Activated CD4-positive, alpha-beta T cell treated with anti-CD3 and anti-CD28 coated beads for 36 hours (primary cell): ENCODE measurements at regions of chr19 and their contacts with region 1.

Region 1: DNA sequence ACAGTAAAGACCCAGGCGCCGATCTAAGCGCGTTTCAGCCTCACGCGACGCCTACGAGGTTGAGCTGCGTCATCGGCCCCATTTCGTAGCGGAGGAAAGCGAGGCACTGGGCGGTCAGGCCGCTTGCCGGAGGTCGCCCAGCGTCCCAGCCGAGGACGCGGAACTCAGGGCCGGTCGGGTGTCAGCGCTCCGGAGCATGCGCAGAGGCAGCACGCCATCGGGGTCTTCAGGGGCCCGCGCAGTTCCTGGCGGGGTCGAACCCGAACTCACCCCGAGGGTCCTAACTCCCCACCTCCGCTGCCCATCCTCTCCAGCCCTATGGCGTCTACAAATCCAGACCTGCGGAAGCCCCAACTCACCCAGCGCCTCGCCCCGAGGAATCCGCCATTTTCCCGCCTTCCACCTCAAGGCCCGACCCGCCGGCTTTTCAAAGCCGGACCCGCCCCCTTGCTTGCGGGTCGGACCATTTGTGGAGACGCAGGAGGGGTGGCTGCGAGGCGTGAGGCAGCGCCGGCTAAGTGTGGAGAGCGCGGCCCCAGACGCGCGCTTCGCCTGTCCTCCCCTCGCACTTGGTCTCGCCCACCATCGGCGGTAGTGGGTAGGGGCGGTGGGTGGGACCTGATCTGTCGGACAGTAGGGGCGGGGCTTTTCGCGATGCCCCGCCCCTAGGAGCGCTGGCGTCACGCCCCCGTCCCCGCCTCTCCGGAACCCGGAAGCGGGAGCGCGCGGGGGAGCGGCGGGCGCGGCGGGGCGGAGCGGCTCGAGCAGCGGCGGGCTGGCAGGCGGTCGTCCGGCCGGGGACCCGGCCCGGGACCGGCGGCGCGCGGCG is at the starts of genes HAUS8 and MYO9B:
- DNase-seq: peak; percentile 100
- ATAC-seq: peak; percentile 82
- H3K4me3 Mint-ChIP-seq: peak within 1 kb of the TSS; percentile 99
- H3K27ac Mint-ChIP-seq: peak within 1 kb of the TSS; percentile 98
- H3K4me1 Mint-ChIP-seq: peaks cover 56% of the 10 kb centered on the region
- H3K27me3 Mint-ChIP-seq: no peaks in the 10 kb centered on the region
- total RNA-seq, gene HAUS8: 32.6 to 41.7 TPM
- total RNA-seq, gene MYO9B: 90.3 to 98.5 TPM

Region 2: GRCh38 chr19:16111160-16111908 is 963.9 kb before region 1 on chr19 and contains the start of gene RAB8A:
- CTCF ChIA-PET with region 1: no interaction called
- POLR2A ChIA-PET with region 1: no interaction called
- intact Hi-C with region 1: loop called in 1 of 2 experiments (anchors 1 kb)
- DNase-seq: peak; percentile 99
- ATAC-seq: peak; percentile 96
- H3K4me3 Mint-ChIP-seq: peak within 1 kb of the TSS; percentile 96
- H3K27ac Mint-ChIP-seq: peak within 1 kb of the TSS; percentile 97
- H3K4me1 Mint-ChIP-seq: peaks cover 39% of the 10 kb centered on the region
- H3K27me3 Mint-ChIP-seq: no peaks in the 10 kb centered on the region
- total RNA-seq, gene RAB8A: 165 to 218 TPM

Region 3: DNA sequence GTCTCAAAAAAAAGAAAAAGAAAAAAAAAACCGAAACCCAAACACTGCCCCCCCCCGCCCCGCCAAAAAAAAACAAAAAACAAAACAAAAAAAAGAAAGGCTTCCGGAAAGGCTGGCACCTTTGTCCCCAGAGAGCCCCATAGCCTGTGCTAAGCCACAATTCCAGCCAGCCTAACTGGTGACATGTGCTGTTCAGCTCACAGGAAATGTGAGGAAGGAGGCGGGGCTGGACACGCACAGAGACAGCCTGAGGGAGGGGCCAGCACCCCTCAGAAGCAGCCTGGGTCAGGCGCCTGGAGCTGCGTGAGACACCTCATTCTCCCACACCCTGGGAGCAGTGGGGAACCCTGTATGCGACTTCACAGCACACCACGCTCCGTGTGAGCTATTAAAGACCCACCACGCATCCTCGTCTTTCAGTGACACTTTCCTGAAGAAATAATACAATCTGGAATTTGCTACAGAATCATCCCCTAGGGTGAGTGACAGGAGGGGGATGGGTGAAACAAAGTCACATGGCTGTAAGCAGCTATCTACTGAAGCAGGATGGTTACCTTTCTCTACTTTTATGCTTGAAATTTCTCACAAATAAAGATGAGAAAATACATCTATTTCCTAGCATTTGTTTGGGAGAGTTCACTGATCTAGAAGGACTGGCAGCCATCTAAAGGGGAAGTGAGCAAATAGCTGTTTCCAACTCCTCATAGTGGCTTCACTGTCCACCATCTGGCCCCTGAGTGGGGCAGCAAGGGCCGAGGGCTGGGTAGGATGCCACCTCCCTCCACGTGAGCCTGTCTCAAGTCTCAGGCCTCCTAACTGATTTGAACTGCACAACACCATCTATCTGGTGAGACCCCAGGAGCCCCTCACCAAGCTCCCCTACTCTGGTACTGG is 490.8 kb before region 1 on chr19:
- CTCF ChIA-PET with region 1: no interaction called
- POLR2A ChIA-PET with region 1: no interaction called
- intact Hi-C with region 1: loop called (anchors 5 to 10 kb)
- DNase-seq: peak; percentile 94
- ATAC-seq: peak; percentile 79
- H3K4me3 Mint-ChIP-seq: peak overlapping the region; percentile 79
- H3K27ac Mint-ChIP-seq: peak overlapping the region; percentile 95
- H3K4me1 Mint-ChIP-seq: peaks cover 76% of the 10 kb centered on the region
- H3K27me3 Mint-ChIP-seq: no peaks in the 10 kb centered on the region

Region 4: DNA sequence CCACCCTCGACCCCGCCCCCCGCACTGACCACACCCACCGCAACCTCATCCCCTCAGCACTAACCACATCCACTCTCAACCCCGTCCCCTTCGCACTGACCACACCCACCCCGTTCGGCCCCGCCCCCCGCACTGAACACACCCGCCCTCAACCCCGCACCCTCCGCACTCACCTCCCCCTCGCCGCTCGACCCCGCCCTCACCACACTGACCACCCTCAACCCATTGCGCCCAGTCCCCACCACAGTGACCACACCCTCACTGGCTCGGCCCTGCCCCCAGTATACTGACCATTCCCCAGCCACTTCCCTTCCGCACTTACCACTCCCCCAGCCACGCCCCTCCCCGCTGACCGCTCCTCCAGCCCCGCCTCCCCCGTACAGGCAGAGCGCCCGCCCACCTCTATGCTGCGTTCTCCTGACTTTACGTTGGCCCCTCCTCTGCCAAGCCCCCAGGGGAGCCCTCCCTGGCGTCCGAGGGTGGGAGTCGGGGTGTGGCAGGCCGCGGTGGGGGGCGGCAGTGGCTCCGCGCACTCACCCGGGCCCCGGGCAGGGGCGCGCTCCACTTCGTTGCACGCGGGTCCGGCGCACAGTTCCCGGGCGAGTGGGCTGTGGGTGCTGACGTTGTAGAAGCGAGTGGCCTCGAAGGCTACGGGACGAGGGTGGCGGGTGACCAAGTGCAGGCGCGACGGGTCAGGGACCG is 177.9 kb before region 1 on chr19:
- CTCF ChIA-PET with region 1: no interaction called
- POLR2A ChIA-PET with region 1: no interaction called
- intact Hi-C with region 1: loop called in 1 of 2 experiments (anchors 1 kb)
- DNase-seq: peak; percentile 75
- ATAC-seq: peak; percentile 53
- H3K4me3 Mint-ChIP-seq: no peak overlapping the region
- H3K27ac Mint-ChIP-seq: no peak overlapping the region
- H3K4me1 Mint-ChIP-seq: peaks cover 16% of the 10 kb centered on the region
- H3K27me3 Mint-ChIP-seq: peaks cover 26% of the 10 kb centered on the region

Region 5: DNA sequence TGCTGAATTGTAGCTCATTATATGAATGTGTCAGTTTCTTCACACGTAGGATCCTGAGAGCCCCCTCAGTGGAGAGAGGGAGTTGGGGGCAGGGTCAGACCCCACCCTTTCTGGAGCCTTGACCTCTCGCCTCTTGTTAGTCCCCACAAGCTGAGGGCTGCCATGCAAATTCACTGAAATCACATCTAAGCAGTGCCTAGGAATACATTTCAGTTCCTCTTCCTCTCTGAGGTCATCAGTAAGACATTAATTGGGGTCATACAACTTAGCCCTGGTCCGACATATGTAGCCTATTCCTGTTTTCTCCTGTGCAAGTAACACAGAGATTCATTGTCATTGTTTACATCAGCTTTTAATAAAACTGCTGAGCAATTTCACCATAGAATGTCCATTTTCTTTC is 30.3 kb after region 1 on chr19:
- CTCF ChIA-PET with region 1: no interaction called
- POLR2A ChIA-PET with region 1: no interaction called
- intact Hi-C with region 1: no loop called
- DNase-seq: no peak
- ATAC-seq: no peak
- H3K4me3 Mint-ChIP-seq: no peak overlapping the region
- H3K27ac Mint-ChIP-seq: no peak overlapping the region
- H3K4me1 Mint-ChIP-seq: peaks cover 23% of the 10 kb centered on the region
- H3K27me3 Mint-ChIP-seq: no peaks in the 10 kb centered on the region

Region 6: DNA sequence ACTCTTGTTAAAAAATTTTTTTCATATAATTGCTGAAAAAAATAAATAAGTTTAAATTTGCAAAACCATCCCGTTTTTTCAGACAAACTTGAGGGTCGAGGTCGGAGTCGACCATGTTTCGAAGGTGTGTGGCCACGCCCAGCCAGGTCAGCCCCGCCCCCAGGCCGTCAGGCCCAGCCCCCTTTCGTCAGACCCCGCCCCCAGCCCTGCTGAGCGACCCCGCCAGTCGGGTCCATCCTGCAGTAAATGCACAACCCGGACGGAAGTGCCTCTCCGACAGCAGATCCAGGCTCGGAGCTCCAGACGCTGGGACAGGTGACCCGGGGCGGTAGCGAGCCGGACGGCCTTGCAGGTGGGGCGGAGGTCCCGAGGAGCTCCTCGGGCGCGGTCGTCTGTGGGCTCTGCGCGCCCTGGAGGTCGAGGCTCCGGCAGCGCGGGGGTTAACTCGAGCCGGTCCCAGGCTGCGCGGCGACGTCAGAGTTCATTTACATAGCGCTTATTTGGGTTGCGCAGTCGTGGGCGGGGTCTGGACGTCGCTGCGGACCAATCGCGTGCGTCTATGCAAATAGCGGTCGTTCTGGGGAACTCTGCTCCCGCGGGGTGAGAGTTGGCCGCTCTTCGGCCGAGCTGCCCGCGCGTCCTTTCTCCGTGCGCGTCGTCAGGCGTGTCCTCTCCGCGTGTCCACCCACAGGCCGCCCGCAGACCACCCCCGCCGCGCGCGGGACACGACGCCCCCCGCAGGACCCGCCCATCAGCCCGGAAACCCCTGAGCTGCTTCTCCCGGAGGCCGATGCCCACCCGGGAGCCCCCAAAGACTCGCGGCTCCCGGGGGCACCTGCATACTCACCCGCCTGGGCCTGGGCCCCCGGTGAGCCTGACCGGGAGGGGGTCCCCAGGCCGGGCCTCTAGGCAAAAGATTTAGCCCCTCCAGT is 151.0 kb after region 1 on chr19 and contains the start of gene OCEL1:
- CTCF ChIA-PET with region 1: no interaction called
- POLR2A ChIA-PET with region 1: interaction called, 5 read pairs
- intact Hi-C with region 1: loop called in 1 of 2 experiments (anchors 1 kb)
- DNase-seq: peak; percentile 99
- ATAC-seq: peak; percentile 92
- H3K4me3 Mint-ChIP-seq: peak within 1 kb of the TSS; percentile 80
- H3K27ac Mint-ChIP-seq: peak within 1 kb of the TSS; percentile 93
- H3K4me1 Mint-ChIP-seq: peaks cover 7% of the 10 kb centered on the region
- H3K27me3 Mint-ChIP-seq: no peaks in the 10 kb centered on the region
- total RNA-seq, gene OCEL1: 10.9 to 11.7 TPM

Region 7: GRCh38 chr19:17305517-17306284 is 230.5 kb after region 1 on chr19 and contains the start of gene MRPL34:
- CTCF ChIA-PET with region 1: no interaction called
- POLR2A ChIA-PET with region 1: no interaction called
- intact Hi-C with region 1: loop called in 1 of 2 experiments (anchors 1 kb)
- DNase-seq: peak; percentile 97
- ATAC-seq: peak; percentile 70
- H3K4me3 Mint-ChIP-seq: peak within 1 kb of the TSS; percentile 86
- H3K27ac Mint-ChIP-seq: peak within 1 kb of the TSS; percentile 92
- H3K4me1 Mint-ChIP-seq: peaks cover 46% of the 10 kb centered on the region
- H3K27me3 Mint-ChIP-seq: no peaks in the 10 kb centered on the region
- total RNA-seq, gene MRPL34: 72.0 to 88.6 TPM

Region 8: DNA sequence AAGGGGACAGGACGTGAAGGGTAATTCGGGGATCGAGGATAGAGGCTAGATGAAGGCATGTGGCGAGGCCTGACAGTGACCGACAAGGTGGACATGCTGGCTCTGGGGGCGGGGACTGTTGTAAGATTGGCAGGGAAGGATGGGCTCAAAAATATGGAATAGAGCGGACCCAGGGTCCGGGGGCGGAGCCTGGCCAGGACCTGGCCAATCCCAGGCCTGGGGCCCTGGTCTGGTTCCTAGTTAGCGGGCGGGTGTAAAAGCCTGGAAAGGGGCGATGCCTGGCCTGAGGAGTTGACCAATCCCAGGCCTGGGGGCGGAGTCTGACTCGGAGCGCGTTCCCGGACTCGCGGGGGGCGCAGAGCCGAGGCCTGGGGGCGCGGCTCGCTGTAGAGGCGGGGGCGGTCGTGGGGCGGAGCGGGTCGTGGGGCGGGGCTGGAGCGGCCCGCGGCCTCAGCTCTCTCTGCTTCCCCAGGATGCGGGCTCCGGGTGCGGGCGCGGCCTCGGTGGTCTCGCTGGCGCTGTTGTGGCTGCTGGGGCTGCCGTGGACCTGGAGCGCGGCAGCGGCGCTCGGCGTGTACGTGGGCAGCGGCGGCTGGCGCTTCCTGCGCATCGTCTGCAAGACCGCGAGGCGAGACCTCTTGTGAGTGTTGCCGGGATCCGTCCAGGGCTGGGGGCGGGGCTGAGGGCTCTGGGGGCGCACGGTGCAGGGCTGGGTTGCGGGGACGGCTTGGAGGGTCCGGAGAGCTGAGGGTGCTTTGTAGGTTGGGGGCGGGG is 395.0 kb after region 1 on chr19 and contains the start of gene SLC27A1:
- CTCF ChIA-PET with region 1: no interaction called
- POLR2A ChIA-PET with region 1: no interaction called
- intact Hi-C with region 1: loop called in 1 of 2 experiments (anchors 1 kb)
- DNase-seq: peak; percentile 93
- ATAC-seq: peak; percentile 90
- H3K4me3 Mint-ChIP-seq: peak within 1 kb of the TSS; percentile 86
- H3K27ac Mint-ChIP-seq: peak within 1 kb of the TSS; percentile 91
- H3K4me1 Mint-ChIP-seq: peaks cover 25% of the 10 kb centered on the region
- H3K27me3 Mint-ChIP-seq: no peaks in the 10 kb centered on the region
- total RNA-seq, gene SLC27A1: 2.2 to 2.7 TPM